ENCODE measurements at regions of chr19 and their contacts with region 1.

Region 1: DNA sequence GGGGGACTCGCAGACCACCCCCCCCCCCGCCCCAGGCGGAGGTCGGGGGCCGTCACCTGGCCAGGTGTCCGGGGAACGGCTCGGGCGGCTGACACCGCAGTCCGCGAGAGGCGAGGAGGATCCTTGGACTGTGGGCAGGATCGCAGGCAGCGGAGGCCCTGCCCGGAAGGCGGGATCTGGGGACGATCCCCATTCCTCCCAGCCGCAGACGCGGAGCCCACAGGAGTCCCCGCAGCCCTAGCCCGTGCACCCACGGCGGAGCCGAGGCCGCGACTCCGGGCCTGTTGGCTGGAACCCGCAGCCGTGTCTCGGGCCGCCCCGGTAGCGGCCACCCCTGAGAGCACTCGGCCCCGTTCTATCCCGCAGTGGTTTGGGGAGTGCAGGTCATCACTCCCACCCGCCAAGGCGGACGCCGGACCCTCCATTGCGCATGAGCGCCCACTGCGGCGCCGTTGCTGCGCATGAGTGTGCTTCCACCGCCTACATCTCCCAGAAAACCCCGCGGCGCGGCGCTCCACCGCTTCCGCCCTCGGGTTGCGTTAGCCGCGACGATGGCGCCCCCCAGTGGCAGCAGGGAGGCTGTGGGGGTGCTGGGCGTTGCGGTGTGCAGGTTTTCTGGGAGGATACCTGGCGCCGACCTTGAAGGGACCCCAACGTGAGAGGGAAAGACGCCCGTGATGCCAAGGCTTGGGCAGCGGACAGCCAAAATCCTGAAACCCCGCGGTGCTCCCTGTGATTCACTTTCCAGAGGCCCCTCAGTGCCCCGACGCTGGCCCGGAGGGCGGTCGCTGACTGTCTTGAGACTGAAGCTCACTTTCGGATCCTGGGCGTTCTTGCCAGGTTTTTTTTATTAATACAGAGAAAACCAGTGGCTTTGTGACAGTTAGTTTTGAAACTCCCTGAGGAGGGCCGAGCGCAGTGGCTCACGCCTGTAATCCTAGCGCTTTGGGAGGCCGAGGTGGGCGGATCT is 4.4 kb upstream of the ZNF329 start:
- DNase-seq: peak; percentile 91
- ATAC-seq: peak; percentile 92
- H3K4me3 ChIP-seq: peak overlapping the region; percentile 72
- H3K27ac ChIP-seq: peak overlapping the region; percentile 70
- H3K4me1 ChIP-seq: no peaks in the 10 kb centered on the region; the same call in 1 of the 2 replicates
- H3K27me3 ChIP-seq: no peaks in the 10 kb centered on the region
- CTCF ChIP-seq: peak; percentile 99
- POLR2A ChIP-seq: peak; percentile 62; the same call in 1 of the 2 replicates
- RAD21 ChIP-seq: peak; percentile 99

Region 2: GRCh38 chr19:57103573-57104277 is 1051.2 kb before region 1 on chr19:
- CTCF ChIA-PET with region 1: no interaction called
- POLR2A ChIA-PET with region 1: no interaction called
- dilution Hi-C with region 1: no loop called
- in situ Hi-C with region 1: no loop called
- intact Hi-C with region 1: loop called (anchors 2 kb)
- DNase-seq: peak; percentile 47
- ATAC-seq: peak; percentile 89
- H3K4me3 ChIP-seq: peak overlapping the region; percentile 35; the same call in 1 of the 2 replicates
- H3K27ac ChIP-seq: no peak overlapping the region
- H3K4me1 ChIP-seq: peaks cover 1% of the 10 kb centered on the region; the same call in 1 of the 2 replicates
- H3K27me3 ChIP-seq: no peaks in the 10 kb centered on the region
- CTCF ChIP-seq: peak; percentile 78
- POLR2A ChIP-seq: no peak
- RAD21 ChIP-seq: peak; percentile 84

Region 3: DNA sequence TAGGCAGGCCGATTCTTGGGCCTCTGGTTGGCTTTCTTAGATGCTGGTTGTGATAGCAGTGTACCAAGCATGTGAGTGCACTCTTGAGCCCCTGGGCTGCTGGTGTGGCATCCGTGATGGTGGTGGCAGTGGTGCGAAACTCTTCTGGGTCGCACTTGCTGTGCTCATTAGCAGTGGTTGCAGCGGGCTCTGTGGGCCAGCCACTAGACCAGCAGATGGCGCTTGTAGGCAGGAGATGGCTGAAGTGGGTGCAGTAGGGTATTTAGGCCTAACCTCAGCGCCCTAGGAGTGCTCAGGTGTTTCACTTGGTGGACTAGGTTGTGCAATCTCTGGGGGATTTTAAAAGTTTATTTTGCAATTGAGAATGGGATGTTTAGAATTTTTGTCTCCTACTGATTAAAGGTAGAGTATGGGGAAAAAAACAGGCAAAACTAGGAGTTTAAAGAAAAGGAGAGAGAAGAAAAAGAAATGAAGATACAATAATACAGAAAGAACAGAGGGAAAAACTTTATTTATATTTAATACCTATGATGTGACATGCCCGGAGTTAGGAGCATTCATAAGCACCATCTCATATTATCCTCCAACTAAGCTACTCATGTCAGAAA is 748.3 kb before region 1 on chr19:
- CTCF ChIA-PET with region 1: interaction called, 3 read pairs
- POLR2A ChIA-PET with region 1: no interaction called
- dilution Hi-C with region 1: no loop called
- in situ Hi-C with region 1: no loop called
- intact Hi-C with region 1: loop called (anchors 5 kb)
- DNase-seq: peak; percentile 45
- ATAC-seq: peak; percentile 66
- H3K4me3 ChIP-seq: no peak overlapping the region
- H3K27ac ChIP-seq: no peak overlapping the region
- H3K4me1 ChIP-seq: no peaks in the 10 kb centered on the region
- H3K27me3 ChIP-seq: no peaks in the 10 kb centered on the region
- CTCF ChIP-seq: peak; percentile 72
- POLR2A ChIP-seq: no peak
- RAD21 ChIP-seq: peak; percentile 75

Region 4: DNA sequence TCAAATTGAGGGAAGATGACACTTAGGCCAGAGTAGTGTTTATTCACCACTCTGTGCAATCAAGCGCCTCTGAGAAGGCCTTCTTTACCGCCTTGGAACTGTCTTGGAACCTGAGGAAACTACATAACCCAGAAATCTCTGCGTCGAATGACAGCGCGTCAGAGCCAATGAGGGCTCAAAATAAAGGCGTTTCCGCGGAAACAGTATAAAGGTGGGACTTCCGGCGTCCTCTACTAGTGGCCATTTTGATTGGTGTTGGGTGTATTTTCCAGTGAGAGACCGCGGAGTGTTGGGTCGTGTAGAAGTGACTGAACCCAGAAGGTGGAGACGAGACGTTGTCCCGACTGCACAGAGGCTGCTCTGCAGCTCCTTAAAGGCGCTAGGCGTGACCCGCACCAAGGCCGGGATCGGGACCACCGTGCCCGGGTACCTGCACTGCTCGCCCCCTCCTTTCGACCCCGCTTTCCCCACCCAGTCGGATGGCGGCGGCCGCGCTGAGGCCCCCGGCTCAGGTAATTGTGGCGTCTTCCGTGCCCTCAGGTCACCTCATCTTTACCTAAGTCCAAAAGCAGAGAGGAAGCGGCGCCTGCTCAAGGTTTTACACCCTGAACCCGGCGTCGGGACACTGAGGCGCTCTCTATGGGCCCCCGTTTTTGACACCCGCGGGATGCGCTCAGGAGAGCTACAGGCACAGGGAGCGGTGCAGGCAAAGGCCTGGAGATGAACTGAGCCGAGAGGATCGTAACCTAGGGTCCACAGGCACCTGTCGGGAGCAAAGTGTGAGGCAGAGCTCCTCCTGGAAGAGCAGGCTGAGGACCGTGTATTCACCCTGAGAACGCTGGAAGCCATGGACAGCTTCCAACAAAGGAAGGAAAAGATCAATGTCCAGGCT is 408.1 kb before region 1 on chr19 and contains the start of gene ZNF776:
- CTCF ChIA-PET with region 1: no interaction called
- POLR2A ChIA-PET with region 1: no interaction called
- dilution Hi-C with region 1: no loop called
- in situ Hi-C with region 1: loop called (anchors 10 kb)
- intact Hi-C with region 1: no loop called
- DNase-seq: peak; percentile 89
- ATAC-seq: peak; percentile 99
- H3K4me3 ChIP-seq: peak within 1 kb of the TSS; percentile 92
- H3K27ac ChIP-seq: peak within 1 kb of the TSS; percentile 83
- H3K4me1 ChIP-seq: peaks cover 2% of the 10 kb centered on the region; the same call in 1 of the 2 replicates
- H3K27me3 ChIP-seq: no peaks in the 10 kb centered on the region
- CTCF ChIP-seq: no peak
- POLR2A ChIP-seq: peak; percentile 53
- RAD21 ChIP-seq: no peak
- total RNA-seq, gene ZNF776: 14.3 and 15.8 TPM in 2 replicates

Region 5: DNA sequence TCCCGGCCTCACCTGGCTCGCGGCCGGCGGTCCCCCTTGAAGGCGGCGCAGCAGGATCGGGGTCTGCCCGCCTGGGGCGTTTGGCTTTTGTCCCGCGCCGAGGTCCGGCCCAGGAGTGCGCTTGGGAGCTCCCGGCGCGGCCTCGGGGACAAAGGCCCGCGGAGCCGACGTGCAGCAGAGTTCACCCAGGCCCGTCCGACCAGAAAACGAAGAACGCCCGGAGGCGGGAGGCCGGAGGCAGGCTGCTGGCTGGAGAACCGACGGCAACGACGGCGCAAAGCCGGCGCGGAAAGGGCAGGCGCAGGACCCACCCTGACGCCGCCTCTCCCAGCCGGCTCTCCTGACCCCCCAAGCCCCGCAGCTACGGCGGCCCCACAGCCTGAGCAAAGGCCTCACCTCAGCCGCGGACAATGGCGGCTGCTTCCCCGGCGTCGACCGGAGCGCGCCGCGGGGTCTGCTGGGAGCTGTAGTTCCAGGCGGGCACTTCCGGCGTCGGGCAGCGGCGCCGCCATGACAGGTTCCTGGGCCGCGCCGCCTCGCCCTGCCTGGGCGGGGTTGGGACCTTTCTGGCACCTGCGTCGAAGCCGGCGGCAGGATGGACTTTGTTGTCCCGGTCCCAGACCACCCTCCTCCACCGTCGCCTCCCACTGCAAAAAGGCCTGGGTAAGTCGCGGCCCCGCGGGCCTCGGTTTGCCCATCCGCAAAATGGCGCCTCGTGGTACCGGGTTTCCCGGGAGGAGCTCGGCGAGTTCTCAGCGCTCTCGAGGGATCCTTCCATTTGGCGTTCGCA is 152.4 kb before region 1 on chr19 and contains the start of gene ZNF606:
- CTCF ChIA-PET with region 1: no interaction called
- POLR2A ChIA-PET with region 1: no interaction called
- dilution Hi-C with region 1: no loop called
- in situ Hi-C with region 1: no loop called
- intact Hi-C with region 1: loop called (anchors 10 kb)
- DNase-seq: peak; percentile 84
- ATAC-seq: peak; percentile 99
- H3K4me3 ChIP-seq: peak within 1 kb of the TSS; percentile 82
- H3K27ac ChIP-seq: peak within 1 kb of the TSS; percentile 83
- H3K4me1 ChIP-seq: no peaks in the 10 kb centered on the region
- H3K27me3 ChIP-seq: no peaks in the 10 kb centered on the region
- CTCF ChIP-seq: no peak
- POLR2A ChIP-seq: 0 out of 2 replicates have a peak, but pooled peaks have one; percentile 51
- RAD21 ChIP-seq: no peak
- total RNA-seq, gene ZNF606: 9.0 and 9.4 TPM in 2 replicates

Region 6: GRCh38 chr19:58326914-58327726 is 172.2 kb after region 1 on chr19 and contains the start of gene ZSCAN22:
- CTCF ChIA-PET with region 1: no interaction called
- POLR2A ChIA-PET with region 1: no interaction called
- dilution Hi-C with region 1: no loop called
- in situ Hi-C with region 1: no loop called
- intact Hi-C with region 1: no loop called
- DNase-seq: peak; percentile 95
- ATAC-seq: peak; percentile 94
- H3K4me3 ChIP-seq: peak within 1 kb of the TSS; percentile 72
- H3K27ac ChIP-seq: peak within 1 kb of the TSS; percentile 76
- H3K4me1 ChIP-seq: peaks cover 2% of the 10 kb centered on the region; the same call in 1 of the 2 replicates
- H3K27me3 ChIP-seq: no peaks in the 10 kb centered on the region
- CTCF ChIP-seq: no peak
- POLR2A ChIP-seq: peak; percentile 78; the same call in 1 of the 2 replicates
- RAD21 ChIP-seq: no peak; the same call in 1 of the 2 replicates
- total RNA-seq, gene ZSCAN22: 1.9 and 2.5 TPM in 2 replicates

Measured in IMR-90 (cell line).